ENCODE measurements at regions of chr15 and their contacts with region 1.

Region 1: DNA sequence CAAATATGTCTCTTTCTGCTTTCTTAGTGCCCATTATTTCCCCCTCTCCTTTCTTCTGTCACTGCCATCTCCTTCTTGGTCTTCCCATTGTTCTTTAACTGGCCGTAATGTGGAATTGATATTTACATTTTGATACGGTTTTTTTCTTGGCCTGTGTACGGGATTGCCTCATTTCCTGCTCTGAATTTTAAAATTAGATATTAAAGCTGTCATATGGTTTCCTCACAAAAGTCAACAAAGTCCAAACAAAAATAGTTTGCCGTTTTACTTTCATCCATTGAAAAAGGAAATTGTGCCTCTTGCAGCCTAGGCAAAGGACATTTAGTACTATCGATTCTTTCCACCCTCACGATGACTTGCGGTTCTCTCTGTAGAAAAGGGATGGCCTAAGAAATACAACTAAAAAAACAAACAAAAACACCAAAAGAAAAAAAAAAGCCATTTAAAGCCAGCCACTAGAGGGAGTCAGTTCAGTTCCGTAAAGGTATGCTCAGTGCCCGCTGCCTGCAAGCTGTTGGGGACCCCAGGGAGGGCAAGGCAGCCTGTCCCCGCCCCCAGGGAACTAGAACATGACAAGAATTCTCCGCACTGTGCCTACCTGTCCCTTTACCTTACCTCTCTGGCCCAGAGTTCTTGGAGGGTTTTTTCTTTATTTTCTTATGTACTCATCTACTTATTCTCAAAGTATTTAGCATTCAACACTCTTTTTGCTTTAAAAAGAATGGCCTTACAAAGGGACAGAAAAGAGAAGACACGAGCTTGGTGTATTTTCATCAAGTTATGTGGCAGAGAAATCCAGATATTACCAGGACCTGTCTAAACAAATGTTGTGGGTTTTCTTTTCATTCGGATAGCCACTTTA is 30.0 kb upstream of the NR2E3 start:
- DNase-seq: peak in 1 of 3 donors; percentile 70
- ATAC-seq: peak; percentile 62 to 64
- H3K4me3 ChIP-seq: no peak overlapping the region
- H3K27ac ChIP-seq: no peak overlapping the region
- H3K4me1 ChIP-seq: no peaks in the 10 kb centered on the region
- H3K27me3 ChIP-seq: no peaks in the 10 kb centered on the region

Region 2: DNA sequence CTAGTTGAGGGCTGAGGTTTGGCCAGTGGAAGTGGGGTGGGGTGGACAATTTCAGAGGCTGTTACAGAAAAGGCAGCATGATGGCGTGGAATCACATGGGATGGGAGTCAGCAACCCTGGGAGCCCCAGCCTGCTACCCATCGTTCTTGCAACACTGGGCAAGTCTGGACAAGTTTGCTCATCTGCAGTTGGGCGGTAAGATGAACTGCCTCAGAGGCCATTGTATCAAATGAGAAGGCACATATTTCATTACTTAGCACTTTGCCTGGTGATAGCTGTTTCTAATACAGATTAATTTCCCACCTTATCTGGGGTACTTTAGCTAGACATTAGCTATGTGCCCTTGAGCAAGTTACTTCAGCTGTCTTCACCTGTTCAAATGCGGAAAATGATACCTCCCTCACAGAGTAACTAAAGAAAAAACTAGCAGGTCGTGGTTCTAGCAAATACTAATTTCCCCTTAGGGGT is 416.2 kb before region 1 on chr15:
- intact Hi-C with region 1: no loop called
- DNase-seq: no peak
- ATAC-seq: no peak
- H3K4me3 ChIP-seq: no peak overlapping the region
- H3K27ac ChIP-seq: no peak overlapping the region
- H3K4me1 ChIP-seq: no peaks in the 10 kb centered on the region
- H3K27me3 ChIP-seq: no peaks in the 10 kb centered on the region

Region 3: DNA sequence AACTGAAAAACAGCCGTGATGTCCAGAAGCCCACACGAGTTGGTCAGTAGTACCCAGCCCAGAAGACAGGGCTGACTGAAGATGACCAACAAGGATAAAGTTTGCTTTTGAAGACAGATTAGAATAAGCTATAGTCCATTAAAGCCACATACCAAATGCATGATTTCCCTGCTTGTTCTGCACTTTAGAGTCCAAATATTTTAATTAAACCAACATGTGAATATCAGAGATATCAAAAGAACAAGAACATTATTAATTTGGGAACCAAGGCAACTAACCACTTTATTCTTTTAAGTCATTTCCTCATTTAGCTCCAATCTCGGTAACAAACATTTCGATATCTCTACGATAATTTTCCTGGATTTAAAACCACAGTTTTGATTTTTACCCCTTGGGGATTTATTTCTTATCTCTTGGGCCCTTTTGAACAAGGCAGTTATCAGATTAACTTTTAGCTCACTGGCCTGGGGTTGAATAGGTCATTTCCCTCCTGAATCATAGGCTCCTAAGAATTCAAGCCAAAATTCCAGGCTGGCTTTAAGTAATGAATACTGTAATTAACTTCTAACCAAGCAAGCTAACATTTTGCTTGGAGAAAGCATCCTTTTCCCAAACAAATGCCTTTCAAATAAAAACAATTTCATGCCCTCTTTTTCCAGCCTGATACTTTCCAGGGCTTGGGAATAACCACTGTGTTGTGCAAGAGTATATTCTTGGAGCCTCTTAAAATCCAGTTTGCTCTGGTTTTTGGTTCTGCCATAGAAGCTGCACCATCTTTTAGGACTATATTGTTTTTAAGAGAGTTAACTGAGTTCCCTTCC is 72.9 kb before region 1 on chr15:
- intact Hi-C with region 1: no loop called
- DNase-seq: no peak
- ATAC-seq: peak; percentile 58 to 73
- H3K4me3 ChIP-seq: no peak overlapping the region
- H3K27ac ChIP-seq: no peak overlapping the region
- H3K4me1 ChIP-seq: peaks cover 15% of the 10 kb centered on the region
- H3K27me3 ChIP-seq: no peaks in the 10 kb centered on the region

Region 4: DNA sequence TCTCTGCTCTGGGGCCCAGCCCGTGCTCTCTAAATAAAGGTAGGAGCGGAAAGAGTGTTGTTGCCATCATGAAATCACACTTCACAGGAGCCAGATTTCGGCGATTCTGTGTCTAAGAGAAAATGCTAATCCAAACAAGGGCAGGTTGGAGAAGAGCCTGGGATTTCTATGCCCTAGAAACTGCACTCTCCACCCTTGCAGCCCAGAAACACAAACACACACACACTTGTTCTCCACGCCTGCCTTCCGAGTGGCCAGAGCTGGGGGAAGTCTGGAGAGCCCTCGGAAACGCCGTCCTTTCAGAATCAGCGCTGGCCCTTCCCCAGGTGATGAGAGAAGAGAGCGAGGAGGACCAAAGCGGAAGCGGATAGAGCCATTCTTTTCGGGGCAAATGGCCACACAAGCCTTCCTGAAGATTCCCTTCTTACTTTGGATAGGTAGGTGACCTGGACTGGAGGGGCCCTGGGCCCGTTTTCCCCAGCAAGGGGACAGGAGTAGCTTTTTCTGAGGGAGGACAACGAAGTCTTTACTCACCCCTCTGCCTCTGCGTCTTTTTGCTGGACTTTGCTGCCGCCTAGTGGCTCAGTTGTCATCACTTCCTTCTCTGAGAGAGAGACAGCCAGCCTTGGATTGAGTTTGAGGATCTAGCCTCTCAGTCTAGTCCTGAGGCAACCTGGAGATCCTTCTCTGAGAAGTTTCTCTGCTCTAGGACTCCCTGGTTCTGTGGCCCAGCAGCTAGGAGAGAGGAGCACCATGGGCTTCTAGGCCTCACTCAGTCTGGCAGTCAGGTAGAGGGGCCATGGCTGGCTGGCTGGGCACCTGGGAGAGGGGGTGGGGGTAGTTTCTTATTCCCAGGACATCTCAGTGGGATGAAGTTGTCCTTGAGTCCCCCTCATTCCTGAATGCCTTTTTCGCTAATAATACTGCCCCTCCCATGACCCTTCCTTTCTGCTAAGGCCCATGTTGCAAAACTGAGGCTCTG is 375.6 kb after region 1 on chr15:
- intact Hi-C with region 1: loop called in 1 of 4 experiments (anchors 10 kb)
- DNase-seq: peak; percentile 81 to 93 (median 92)
- ATAC-seq: peak; percentile 92 to 94
- H3K4me3 ChIP-seq: peak overlapping the region; percentile 50
- H3K27ac ChIP-seq: no peak overlapping the region
- H3K4me1 ChIP-seq: no peaks in the 10 kb centered on the region
- H3K27me3 ChIP-seq: no peaks in the 10 kb centered on the region

Measured in right cardiac atrium (tissue), 5 donors.